AG04450 (cell line): ENCODE measurements at regions of chr2 and their contacts with region 1.

Region 1: DNA sequence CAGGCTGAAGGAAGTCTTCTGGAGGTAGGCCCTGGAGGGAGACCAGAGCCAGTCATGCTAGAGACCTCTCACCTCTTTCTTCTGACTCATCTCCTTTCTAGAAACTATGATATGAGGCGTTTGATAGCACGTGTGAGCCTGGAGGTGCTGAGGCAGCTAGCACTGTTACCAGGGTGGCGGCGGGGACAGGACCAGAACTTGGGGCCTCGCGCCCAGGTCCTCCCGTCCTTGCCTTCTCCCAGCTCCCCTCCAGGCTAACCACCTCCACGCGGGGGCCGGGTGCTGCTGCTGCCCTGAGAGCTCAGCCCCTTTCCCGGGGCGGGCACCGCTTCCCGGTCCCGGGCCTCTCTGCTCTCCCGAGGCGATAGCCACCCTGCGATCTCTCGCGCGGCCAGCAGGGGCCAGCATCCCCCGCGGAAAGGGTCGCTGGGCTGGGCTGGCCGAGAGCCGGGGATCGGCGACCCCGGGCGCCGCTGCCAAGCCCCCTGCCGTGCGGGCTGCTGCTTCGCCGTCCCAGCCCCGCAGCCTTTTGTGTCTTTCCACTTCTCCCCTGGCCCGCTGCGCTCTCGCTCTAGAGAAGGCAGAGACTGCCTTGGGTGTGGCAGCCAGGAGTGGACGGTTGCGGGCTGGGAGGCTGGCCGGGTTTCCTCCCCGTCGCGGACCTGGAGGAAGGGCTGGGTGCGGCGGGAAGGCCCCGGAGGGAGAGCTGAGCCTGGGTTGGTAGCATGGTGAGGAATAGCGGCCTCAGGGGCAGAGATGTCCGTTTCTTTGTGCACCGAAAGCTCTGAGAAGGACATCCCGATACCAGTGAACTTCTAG is 49.1 kb downstream of the TMEM17 start:
- DNase-seq: no peak
- H3K4me3 ChIP-seq: peak overlapping the region; percentile 67
- H3K27ac ChIP-seq: peak overlapping the region; percentile 52
- H3K27me3 ChIP-seq: peaks cover 3% of the 10 kb centered on the region
- CTCF ChIP-seq: peak; percentile 84

Region 2: GRCh38 chr2:62443886-62444285 is 13.0 kb before region 1 on chr2:
- CTCF ChIA-PET with region 1: interaction called, 13 read pairs
- POLR2A ChIA-PET with region 1: no interaction called
- DNase-seq: no peak
- H3K4me3 ChIP-seq: no peak overlapping the region
- H3K27ac ChIP-seq: no peak overlapping the region
- H3K27me3 ChIP-seq: peaks cover 31% of the 10 kb centered on the region
- CTCF ChIP-seq: no peak

Region 3: DNA sequence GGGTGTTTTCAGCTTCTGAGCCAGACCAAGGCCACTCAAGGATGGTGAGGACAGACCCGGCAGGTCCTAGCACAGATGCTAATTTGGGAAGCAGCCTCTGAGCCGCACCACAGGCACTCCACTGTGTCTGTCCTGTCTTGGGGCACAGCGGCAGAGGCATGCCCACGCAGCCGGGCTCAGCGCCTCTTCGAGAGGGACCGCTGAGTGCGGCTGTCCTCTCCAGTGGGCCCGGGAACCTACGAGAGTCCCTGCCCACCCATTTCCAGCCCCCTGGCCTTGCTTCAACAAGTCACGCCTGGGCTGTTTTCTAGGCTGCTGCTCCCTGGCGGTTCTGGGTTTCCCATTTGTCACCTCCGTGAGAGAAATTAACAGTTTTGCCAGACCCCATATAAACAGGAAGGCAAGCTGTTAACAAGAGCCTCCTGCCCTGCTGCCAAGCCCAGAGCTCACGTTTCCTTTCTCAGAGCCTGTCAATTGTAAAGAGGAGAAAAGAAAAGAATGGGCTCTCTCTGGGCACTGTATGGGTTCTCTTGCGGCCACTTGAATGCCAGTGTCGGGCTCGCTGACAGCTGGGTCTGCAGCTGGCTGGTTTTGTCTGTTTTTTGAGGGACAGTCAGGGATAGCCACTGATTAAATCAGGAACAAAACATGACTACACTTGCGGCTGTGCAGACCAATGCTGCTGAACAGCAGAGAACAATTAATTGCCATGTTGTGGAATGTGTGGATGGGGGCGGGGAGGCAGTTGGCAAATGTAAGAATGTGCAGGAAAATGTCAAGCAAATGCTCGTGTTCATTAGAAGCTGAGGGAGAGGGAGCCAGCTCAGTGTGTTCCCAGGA is 18.5 kb after region 1 on chr2:
- CTCF ChIA-PET with region 1: interaction called, 22 read pairs
- POLR2A ChIA-PET with region 1: no interaction called
- DNase-seq: no peak
- H3K4me3 ChIP-seq: no peak overlapping the region
- H3K27ac ChIP-seq: no peak overlapping the region
- H3K27me3 ChIP-seq: peaks cover 5% of the 10 kb centered on the region
- CTCF ChIP-seq: no peak

Region 4: GRCh38 chr2:62768615-62769014 is 311.7 kb after region 1 on chr2:
- CTCF ChIA-PET with region 1: interaction called, 291 read pairs
- POLR2A ChIA-PET with region 1: interaction called, 3 read pairs
- DNase-seq: no peak
- H3K4me3 ChIP-seq: no peak overlapping the region
- H3K27ac ChIP-seq: no peak overlapping the region
- H3K27me3 ChIP-seq: no peaks in the 10 kb centered on the region
- CTCF ChIP-seq: no peak

Region 5: GRCh38 chr2:62787386-62787785 is 330.5 kb after region 1 on chr2:
- CTCF ChIA-PET with region 1: interaction called, 14 read pairs
- POLR2A ChIA-PET with region 1: no interaction called
- DNase-seq: no peak
- H3K4me3 ChIP-seq: no peak overlapping the region
- H3K27ac ChIP-seq: no peak overlapping the region
- H3K27me3 ChIP-seq: no peaks in the 10 kb centered on the region
- CTCF ChIP-seq: peak; percentile 38

Region 6: GRCh38 chr2:62947403-62947802 is 490.5 kb after region 1 on chr2:
- CTCF ChIA-PET with region 1: no interaction called
- POLR2A ChIA-PET with region 1: no interaction called
- DNase-seq: no peak
- H3K4me3 ChIP-seq: no peak overlapping the region
- H3K27ac ChIP-seq: no peak overlapping the region
- H3K27me3 ChIP-seq: no peaks in the 10 kb centered on the region
- CTCF ChIP-seq: no peak